RWPE1 (cell line): ENCODE measurements at regions of chr1 and their contacts with region 1.

Region 1: GRCh38 chr1:167268398-167268787 is 47.7 kb downstream of the POU2F1 start:
- DNase-seq: no peak
- H3K27ac ChIP-seq: no peak overlapping the region
- CTCF ChIP-seq: no peak

Region 2: GRCh38 chr1:166062421-166063070 is 1205.8 kb before region 1 on chr1:
- CTCF ChIA-PET with region 1: no interaction called
- POLR2A ChIA-PET with region 1: no interaction called
- DNase-seq: no peak
- H3K27ac ChIP-seq: no peak overlapping the region
- CTCF ChIP-seq: no peak

Region 3: GRCh38 chr1:167357305-167357704 is 88.9 kb after region 1 on chr1:
- CTCF ChIA-PET with region 1: no interaction called
- POLR2A ChIA-PET with region 1: no interaction called
- DNase-seq: no peak
- H3K27ac ChIP-seq: no peak overlapping the region
- CTCF ChIP-seq: no peak

Region 4: GRCh38 chr1:167442124-167442848 is 173.9 kb after region 1 on chr1:
- CTCF ChIA-PET with region 1: interaction called, 11 read pairs
- POLR2A ChIA-PET with region 1: no interaction called
- DNase-seq: peak; percentile 89
- H3K27ac ChIP-seq: no peak overlapping the region
- CTCF ChIP-seq: peak; percentile 89